CD8-positive, alpha-beta memory T cell (primary cell): ENCODE measurements at regions of chr22 and their contacts with region 1.

Region 1: GRCh38 chr22:19629720-19630419 is 84.4 kb upstream of the SEPTIN5 start:
- DNase-seq: peak; percentile 62 to 85 (median 71)
- H3K4me3 ChIP-seq: no peak overlapping the region
- H3K4me3 Mint-ChIP-seq: no peak overlapping the region
- H3K27ac ChIP-seq: no peak overlapping the region
- H3K27ac Mint-ChIP-seq: no peak overlapping the region
- H3K4me1 ChIP-seq: peaks cover 4% of the 10 kb centered on the region
- H3K4me1 Mint-ChIP-seq: peaks cover 0 to 4% (median 2%) of the 10 kb centered on the region in 3 donors
- H3K27me3 ChIP-seq: no peaks in the 10 kb centered on the region
- H3K27me3 Mint-ChIP-seq: peaks cover 4 to 24% of the 10 kb centered on the region in 2 donors

Region 2: DNA sequence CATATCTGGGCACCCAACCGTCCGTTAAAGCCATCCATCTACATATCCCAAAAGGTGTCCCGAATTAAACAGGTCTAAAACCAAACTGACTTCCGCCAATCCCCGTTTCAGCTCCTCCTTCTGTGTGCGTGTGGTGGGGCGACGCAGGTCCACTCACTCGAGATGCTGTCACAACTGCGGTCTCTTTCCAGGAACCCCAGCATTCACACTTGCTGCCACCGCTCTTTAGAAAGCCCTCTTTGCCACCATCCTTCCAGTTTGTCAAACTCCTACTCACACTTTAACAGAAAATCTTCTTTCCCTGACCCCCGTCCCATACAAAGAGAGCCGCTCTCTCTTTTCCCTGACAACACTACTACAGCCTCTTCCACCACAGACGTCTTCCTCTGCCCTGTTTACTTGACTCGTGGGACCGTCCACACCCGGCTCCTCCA is 485.9 kb before region 1 on chr22:
- CTCF ChIA-PET with region 1: interaction called, 26 read pairs
- POLR2A ChIA-PET with region 1: no interaction called
- DNase-seq: peak in 4 of 5 donors; percentile 14 to 58 (median 28)
- H3K4me3 ChIP-seq: peak overlapping the region; percentile 84
- H3K4me3 Mint-ChIP-seq: peak overlapping the region; percentile 94 to 100 (median 99)
- H3K27ac ChIP-seq: peak overlapping the region; percentile 93
- H3K27ac Mint-ChIP-seq: peak overlapping the region; percentile 84 to 100 (median 98)
- H3K4me1 ChIP-seq: peaks cover 20% of the 10 kb centered on the region
- H3K4me1 Mint-ChIP-seq: peaks cover 16 to 29% (median 22%) of the 10 kb centered on the region in 3 donors
- H3K27me3 ChIP-seq: no peaks in the 10 kb centered on the region
- H3K27me3 Mint-ChIP-seq: peaks cover 0 to 8% of the 10 kb centered on the region in 2 donors